Activated CD4-positive, alpha-beta T cell treated with anti-CD3 and anti-CD28 coated beads for 36 hours (primary cell): ENCODE measurements at regions of chr20 and their contacts with region 1.

Region 1: GRCh38 chr20:1466211-1467081 is at the start of gene NSFL1C:
- DNase-seq: peak; percentile 99
- ATAC-seq: peak; percentile 96
- H3K4me3 Mint-ChIP-seq: peak within 1 kb of the TSS; percentile 85
- H3K27ac Mint-ChIP-seq: peak within 1 kb of the TSS; percentile 85
- H3K4me1 Mint-ChIP-seq: peaks cover 42% of the 10 kb centered on the region
- H3K27me3 Mint-ChIP-seq: peaks cover 6% of the 10 kb centered on the region
- total RNA-seq, gene NSFL1C: 71.3 to 78.1 TPM

Region 2: GRCh38 chr20:805713-806112 is 660.7 kb before region 1 on chr20:
- CTCF ChIA-PET with region 1: no interaction called
- POLR2A ChIA-PET with region 1: no interaction called
- intact Hi-C with region 1: no loop called
- DNase-seq: no peak
- ATAC-seq: no peak
- H3K4me3 Mint-ChIP-seq: no peak overlapping the region
- H3K27ac Mint-ChIP-seq: no peak overlapping the region
- H3K4me1 Mint-ChIP-seq: no peaks in the 10 kb centered on the region
- H3K27me3 Mint-ChIP-seq: peaks cover 14% of the 10 kb centered on the region

Region 3: GRCh38 chr20:1225783-1226654 is 240.4 kb before region 1 on chr20 and contains the start of gene RAD21L1:
- CTCF ChIA-PET with region 1: interaction called, 3 read pairs
- POLR2A ChIA-PET with region 1: no interaction called
- intact Hi-C with region 1: loop called in 1 of 2 experiments (anchors 1 kb)
- DNase-seq: peak; percentile 94
- ATAC-seq: peak; percentile 85
- H3K4me3 Mint-ChIP-seq: peak within 1 kb of the TSS; percentile 75
- H3K27ac Mint-ChIP-seq: peak within 1 kb of the TSS; percentile 79
- H3K4me1 Mint-ChIP-seq: peaks cover 11% of the 10 kb centered on the region
- H3K27me3 Mint-ChIP-seq: peaks cover 9% of the 10 kb centered on the region
- total RNA-seq, gene RAD21L1: 0.32 TPM in 1 of 2 experiments, not detected in the other

Region 4: DNA sequence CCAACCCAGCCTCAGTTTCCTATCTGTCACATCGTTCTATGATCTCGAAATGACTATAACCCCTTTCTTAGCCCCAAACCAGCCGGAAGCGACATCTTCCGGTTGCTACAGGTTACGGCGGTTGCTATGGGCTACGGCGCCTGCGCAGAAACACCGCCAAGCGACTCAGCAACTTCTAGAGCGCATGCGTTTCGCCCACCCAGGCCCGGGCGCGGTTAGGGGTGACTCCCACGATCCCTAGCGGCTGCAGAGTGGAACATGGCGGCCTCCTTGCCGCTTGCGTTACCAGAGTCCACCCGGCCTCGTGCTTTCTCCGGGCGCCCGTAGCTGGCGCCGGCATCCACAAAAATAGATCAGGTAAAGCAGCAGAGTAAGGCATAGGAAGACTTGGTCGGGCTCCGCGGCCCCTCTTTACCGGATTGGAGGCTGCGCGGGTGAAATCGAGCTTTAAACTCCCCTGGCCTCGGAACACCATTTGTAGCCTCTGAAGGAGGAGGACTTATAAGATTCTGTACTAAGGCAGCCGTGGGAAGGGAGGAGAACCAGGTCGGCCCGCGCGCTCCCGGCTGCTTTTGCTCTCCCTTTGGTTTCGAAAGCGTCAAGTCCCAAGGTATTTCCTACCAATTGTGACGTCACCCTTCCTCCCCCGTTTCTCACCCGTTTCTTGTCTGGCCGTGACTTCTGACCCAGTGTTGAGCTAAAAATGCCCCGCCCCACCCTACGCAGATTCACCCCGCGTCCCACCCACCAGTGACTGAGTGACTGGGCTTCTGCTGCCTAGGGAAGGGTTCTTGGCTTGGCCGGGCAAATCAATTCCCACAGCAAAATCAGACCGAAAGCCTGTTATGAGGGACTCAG is 141.0 kb before region 1 on chr20:
- CTCF ChIA-PET with region 1: interaction called, 3 read pairs
- POLR2A ChIA-PET with region 1: interaction called, 3 read pairs
- intact Hi-C with region 1: loop called (anchors 1 kb)
- DNase-seq: peak; percentile 99
- ATAC-seq: peak; percentile 83
- H3K4me3 Mint-ChIP-seq: no peak overlapping the region
- H3K27ac Mint-ChIP-seq: no peak overlapping the region
- H3K4me1 Mint-ChIP-seq: peaks cover 28% of the 10 kb centered on the region
- H3K27me3 Mint-ChIP-seq: no peaks in the 10 kb centered on the region

Region 5: DNA sequence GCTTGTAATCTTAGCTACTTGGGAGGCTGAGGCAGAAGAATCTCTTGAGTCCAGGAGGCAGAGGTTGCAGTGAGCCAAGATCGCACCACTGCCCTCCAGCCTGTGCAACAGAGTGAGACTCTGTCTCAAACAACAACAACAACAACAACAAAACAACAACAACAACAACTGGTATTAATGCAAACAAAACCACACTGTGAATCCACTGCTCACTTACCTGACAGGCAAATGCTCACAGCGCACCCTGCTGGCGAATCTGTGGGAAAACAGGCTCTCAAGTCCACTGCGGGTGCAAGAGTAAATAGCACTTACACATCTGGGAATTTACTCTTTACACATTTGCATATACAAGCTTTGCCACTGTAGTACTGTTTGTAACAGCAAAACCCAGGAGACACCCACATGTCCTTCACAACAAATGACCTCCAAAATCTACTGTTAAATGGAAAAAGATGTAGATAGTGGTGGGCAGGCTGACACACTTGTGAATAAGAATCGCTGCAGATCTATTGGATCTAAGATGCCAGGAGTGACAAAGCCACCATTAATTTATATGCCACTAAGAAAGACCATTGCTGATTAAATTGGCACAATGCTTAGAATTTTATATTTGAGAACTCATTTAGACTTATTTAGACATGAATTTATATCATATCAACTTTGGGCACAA is 29.1 kb before region 1 on chr20:
- CTCF ChIA-PET with region 1: interaction called, 18 read pairs
- POLR2A ChIA-PET with region 1: no interaction called
- intact Hi-C with region 1: loop called in 1 of 2 experiments (anchors 1 kb)
- DNase-seq: peak; percentile 89
- ATAC-seq: peak; percentile 56
- H3K4me3 Mint-ChIP-seq: no peak overlapping the region
- H3K27ac Mint-ChIP-seq: no peak overlapping the region
- H3K4me1 Mint-ChIP-seq: peaks cover 27% of the 10 kb centered on the region
- H3K27me3 Mint-ChIP-seq: no peaks in the 10 kb centered on the region

Region 6: DNA sequence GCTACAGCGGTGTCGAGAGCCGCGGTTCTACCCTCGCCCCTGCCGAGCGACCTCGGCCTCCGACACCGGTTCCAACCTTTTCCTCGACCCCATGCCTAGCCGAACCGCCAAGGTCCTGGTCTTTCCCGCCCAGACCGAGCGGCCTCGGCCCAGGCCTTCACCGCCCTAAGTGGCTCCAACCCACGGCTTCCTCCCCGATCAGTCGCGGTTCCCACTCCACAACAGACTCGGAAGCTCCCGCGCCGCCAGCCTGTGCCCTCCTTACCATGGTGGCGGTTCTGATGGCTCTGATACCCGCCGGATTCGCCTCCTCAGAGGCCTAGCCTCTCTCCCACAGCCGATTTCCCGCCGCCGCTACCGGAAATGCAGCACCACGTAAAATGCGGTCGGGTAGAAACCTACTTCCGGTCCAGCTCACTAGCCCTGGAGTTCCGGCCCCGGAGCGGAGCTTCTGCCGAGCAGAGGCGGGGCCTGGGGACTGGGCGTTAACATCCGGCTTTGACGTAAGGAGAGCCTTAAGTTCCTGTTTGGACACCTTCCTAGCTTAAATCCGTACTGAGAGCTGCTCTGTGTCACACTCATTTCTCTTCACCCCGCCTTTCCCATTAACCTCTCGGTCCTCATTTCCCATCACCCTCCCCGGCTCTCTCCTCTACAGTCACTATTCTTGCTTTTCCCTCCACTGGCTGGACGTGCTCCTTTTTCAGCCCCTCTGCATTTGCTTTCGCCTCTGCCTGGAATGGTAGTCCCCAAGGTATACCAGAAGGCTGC is 1004.2 kb after region 1 on chr20 and contains the start of gene SNRPB:
- CTCF ChIA-PET with region 1: no interaction called
- POLR2A ChIA-PET with region 1: no interaction called
- intact Hi-C with region 1: loop called in 1 of 2 experiments (anchors 1 kb)
- DNase-seq: peak; percentile 98
- ATAC-seq: peak; percentile 99
- H3K4me3 Mint-ChIP-seq: peak within 1 kb of the TSS; percentile 96
- H3K27ac Mint-ChIP-seq: peak within 1 kb of the TSS; percentile 100
- H3K4me1 Mint-ChIP-seq: peaks cover 49% of the 10 kb centered on the region
- H3K27me3 Mint-ChIP-seq: no peaks in the 10 kb centered on the region
- total RNA-seq, gene SNRPB: 348 to 466 TPM